Aorta (tissue), 5 donors: ENCODE measurements at regions of chr9 and their contacts with region 1.

Region 1: DNA sequence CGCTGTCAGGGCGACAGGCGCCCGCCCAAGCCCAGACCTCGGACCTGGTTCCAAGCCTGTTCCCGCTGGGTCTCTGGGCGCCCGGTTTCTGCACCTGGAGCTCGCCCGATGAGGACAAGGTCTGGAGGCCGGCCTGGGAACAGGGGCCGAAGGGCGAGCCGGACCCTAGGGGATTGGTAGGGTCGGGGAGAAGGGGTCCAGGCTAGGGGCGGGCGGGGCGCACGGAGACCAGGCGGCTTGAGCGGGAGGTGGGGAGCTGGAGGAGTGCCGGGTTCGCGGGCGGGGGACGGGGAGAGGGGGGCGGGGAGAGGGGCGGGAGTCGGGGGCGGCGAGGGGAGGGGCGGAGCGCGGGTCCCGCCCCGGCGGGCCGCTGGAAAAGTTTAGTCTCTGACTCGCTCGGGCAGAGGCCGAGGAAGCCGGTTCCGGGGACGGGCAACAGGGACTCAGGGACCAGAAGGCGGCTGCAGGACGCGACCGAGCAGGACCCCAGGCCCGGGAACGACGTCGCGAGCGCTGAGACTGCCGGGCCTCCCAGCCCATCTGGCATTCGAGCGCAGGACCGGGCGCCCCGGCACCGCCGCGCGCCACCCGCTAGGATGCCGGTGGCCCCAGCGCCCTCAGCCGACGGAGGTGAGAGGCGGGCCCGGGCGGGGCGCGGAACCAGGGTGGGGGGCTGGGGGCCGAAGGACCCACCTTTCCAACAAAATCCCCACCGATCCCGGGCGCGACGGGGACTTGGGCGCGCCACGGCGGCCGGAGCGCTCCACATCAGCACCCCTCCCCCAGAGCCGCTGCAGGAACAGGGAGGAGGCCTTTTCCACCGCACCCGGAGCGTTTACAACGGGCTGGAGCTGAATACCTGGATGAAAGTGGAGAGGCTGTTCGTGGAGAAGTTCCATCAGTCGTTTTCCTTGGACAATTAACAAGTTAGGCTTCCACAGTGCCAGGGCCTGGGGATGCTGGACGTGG is at the start of gene S1PR3:
- DNase-seq: peak; percentile 80 to 92
- ATAC-seq: peak; percentile 82
- H3K4me3 ChIP-seq: peak within 1 kb of the TSS; percentile 94
- H3K27ac ChIP-seq: peak within 1 kb of the TSS in 1 of 2 donors; percentile 85
- H3K4me1 ChIP-seq: peaks cover 0 to 5% of the 10 kb centered on the region in 2 donors
- H3K27me3 ChIP-seq: no peaks in the 10 kb centered on the region
- total RNA-seq, gene S1PR3: 42.4 to 139 TPM

Region 2: DNA sequence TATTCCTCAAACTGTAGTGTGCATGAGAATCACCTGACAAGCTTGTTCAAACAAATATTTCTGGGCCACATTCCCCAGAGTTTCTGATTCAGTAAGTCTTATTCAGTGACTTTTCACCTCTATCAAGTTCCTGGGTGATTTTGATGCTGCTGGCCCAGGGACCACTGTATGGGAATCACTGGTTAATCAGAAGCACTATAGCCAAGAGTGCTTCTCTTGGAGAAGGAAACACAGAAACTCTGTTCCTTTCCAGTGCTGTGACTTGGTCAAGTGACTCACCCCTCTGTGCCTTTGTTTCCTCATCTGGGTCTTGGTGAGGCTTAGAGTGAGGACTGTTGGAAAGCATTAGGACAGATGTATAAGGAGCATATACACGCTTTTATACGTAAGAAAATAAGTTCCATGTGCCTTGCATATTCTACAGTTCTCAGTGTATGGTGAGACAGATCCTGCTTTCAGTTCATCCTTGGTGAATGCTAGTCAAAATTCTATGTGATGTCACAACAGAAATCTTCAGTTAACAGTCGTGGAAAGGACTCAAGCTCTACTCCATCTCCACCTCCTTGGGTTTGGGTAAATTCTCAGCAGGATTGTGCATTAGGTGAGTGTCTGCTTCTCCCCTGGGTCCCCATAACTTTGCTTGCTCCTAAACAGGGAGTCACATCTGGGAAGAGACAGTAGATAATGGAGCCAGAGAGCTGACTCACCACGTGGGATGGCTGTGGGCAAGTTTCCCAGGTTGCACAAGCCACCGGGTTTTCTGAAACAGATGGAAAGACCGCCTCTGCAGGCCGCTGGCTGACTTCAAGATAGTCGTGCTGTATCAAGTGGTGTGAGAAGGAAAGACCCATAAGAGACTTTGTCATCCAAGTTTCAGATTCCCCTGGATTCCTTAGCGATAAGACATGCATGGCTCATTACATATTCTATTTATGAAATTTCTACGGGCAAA is 339.4 kb before region 1 on chr9:
- intact Hi-C with region 1: loop called in 1 of 2 experiments (anchors 10 kb)
- DNase-seq: peak; percentile 87 to 94
- ATAC-seq: peak; percentile 92
- H3K4me3 ChIP-seq: no peak overlapping the region
- H3K27ac ChIP-seq: peak overlapping the region in 1 of 2 donors; percentile 23
- H3K4me1 ChIP-seq: peaks cover 4 to 5% of the 10 kb centered on the region in 2 donors
- H3K27me3 ChIP-seq: no peaks in the 10 kb centered on the region

Region 3: GRCh38 chr9:88725300-88726019 is 265.9 kb before region 1 on chr9:
- intact Hi-C with region 1: loop called (anchors 5 to 10 kb)
- DNase-seq: no peak
- ATAC-seq: no peak
- H3K4me3 ChIP-seq: no peak overlapping the region
- H3K27ac ChIP-seq: no peak overlapping the region
- H3K4me1 ChIP-seq: no peaks in the 10 kb centered on the region
- H3K27me3 ChIP-seq: no peaks in the 10 kb centered on the region

Region 4: GRCh38 chr9:88733651-88734421 is 257.5 kb before region 1 on chr9:
- intact Hi-C with region 1: loop called (anchors 5 to 10 kb)
- DNase-seq: peak; percentile 59 to 86
- ATAC-seq: peak; percentile 50
- H3K4me3 ChIP-seq: no peak overlapping the region
- H3K27ac ChIP-seq: no peak overlapping the region
- H3K4me1 ChIP-seq: peaks cover 0 to 6% of the 10 kb centered on the region in 2 donors
- H3K27me3 ChIP-seq: no peaks in the 10 kb centered on the region

Region 5: GRCh38 chr9:88777498-88778312 is 213.6 kb before region 1 on chr9:
- intact Hi-C with region 1: loop called (anchors 5 kb)
- DNase-seq: peak in 1 of 2 donors; percentile 60
- ATAC-seq: no peak
- H3K4me3 ChIP-seq: no peak overlapping the region
- H3K27ac ChIP-seq: no peak overlapping the region
- H3K4me1 ChIP-seq: peaks cover 5 to 7% of the 10 kb centered on the region in 2 donors
- H3K27me3 ChIP-seq: no peaks in the 10 kb centered on the region

Region 6: DNA sequence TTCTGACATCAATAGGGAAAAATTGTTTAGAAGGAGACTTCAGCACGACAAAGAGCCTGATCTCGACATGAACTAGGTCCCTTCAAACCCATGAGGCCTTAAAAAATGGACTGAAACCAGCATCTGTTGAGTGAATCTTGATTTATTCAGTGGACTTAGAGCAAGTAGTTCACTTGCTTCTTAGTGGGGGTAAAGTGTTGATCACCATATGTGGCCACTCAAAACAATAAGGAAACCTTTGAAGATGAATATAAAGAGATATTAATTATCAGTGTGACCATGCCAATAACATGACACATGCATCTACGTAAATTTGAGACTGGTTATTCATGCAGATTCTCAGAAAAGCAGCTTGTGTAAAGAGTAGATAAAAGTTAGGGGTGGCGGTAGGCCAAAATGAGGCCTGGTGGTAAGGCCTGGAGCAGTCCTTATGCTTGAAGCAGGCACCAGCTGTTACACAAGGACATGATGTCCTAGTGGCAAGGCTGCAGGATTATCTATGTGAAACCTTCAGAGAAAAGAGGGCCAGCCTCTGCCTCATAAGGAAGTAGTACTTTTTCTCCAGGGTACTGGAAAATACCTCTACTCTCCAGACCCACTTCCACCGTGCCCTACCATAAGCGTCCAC is 61.2 kb after region 1 on chr9:
- intact Hi-C with region 1: no loop called
- DNase-seq: no peak
- ATAC-seq: no peak
- H3K4me3 ChIP-seq: no peak overlapping the region
- H3K27ac ChIP-seq: no peak overlapping the region
- H3K4me1 ChIP-seq: no peaks in the 10 kb centered on the region
- H3K27me3 ChIP-seq: no peaks in the 10 kb centered on the region

Region 7: DNA sequence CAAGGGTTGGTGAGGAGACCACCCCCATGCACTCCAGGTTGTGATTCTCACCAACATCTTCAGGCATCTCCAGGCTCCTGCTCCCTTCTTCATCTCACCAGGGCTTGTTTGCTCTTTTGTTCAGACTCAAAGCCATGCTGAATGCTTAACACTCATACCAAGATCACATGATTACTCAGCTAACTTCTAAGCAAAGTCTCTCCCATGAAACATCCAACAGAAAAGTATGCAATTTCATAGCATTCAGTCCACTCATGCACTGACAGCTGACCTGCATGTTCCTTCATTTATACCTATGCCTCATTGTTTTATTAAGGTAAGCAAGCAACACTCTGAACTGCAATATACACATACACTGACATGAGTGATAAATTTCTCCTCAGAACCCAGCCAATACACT is 118.3 kb after region 1 on chr9:
- intact Hi-C with region 1: no loop called
- DNase-seq: no peak
- ATAC-seq: no peak
- H3K4me3 ChIP-seq: no peak overlapping the region
- H3K27ac ChIP-seq: no peak overlapping the region
- H3K4me1 ChIP-seq: no peaks in the 10 kb centered on the region
- H3K27me3 ChIP-seq: no peaks in the 10 kb centered on the region